Activated naive CD4-positive, alpha-beta T cell treated with anti-CD3 and anti-CD28 coated beads, Interleukin-2, amount 10 ng/mL, durations not matched to agents 7 days and 5 days (primary cell): ENCODE measurements at regions of chr7 and their contacts with region 1.

Region 1: GRCh38 chr7:44565097-44565794 is 8.5 kb downstream of the DDX56 start:
- DNase-seq: peak; percentile 75
- H3K4me3 Mint-ChIP-seq: no peak overlapping the region
- H3K27ac Mint-ChIP-seq: peak overlapping the region; percentile 62
- H3K4me1 Mint-ChIP-seq: peaks cover 11% of the 10 kb centered on the region
- H3K27me3 Mint-ChIP-seq: no peaks in the 10 kb centered on the region

Region 2: GRCh38 chr7:44348300-44348699 is 216.9 kb before region 1 on chr7:
- CTCF ChIA-PET with region 1: interaction called, 12 read pairs
- DNase-seq: peak; percentile 42
- H3K4me3 Mint-ChIP-seq: no peak overlapping the region
- H3K27ac Mint-ChIP-seq: no peak overlapping the region
- H3K4me1 Mint-ChIP-seq: no peaks in the 10 kb centered on the region
- H3K27me3 Mint-ChIP-seq: peaks cover 35% of the 10 kb centered on the region

Region 3: DNA sequence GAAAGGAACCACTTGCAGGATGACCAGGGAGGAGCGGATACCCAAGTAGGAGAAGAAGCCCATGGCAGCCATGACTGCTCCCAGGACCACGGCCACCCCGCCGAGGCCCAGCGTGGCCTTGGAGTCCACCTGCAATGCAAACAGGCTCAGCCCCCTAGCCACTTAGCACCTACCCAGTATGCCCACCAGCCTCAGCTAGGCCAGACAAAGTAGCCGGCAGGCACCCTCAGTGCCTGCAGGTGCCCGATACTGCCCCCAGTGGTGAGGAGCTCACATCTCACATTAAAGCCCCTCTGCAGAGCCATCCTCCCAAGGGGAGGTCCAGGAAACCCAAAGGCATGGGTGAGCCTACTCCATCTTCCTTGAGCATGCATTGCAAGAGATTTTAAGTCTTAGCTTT is 30.7 kb before region 1 on chr7:
- CTCF ChIA-PET with region 1: interaction called, 21 read pairs
- DNase-seq: peak; percentile 66
- H3K4me3 Mint-ChIP-seq: no peak overlapping the region
- H3K27ac Mint-ChIP-seq: no peak overlapping the region
- H3K4me1 Mint-ChIP-seq: peaks cover 4% of the 10 kb centered on the region
- H3K27me3 Mint-ChIP-seq: peaks cover 12% of the 10 kb centered on the region

Region 4: GRCh38 chr7:44547536-44548231 is 17.6 kb before region 1 on chr7:
- CTCF ChIA-PET with region 1: interaction called, 13 read pairs
- DNase-seq: no peak
- H3K4me3 Mint-ChIP-seq: no peak overlapping the region
- H3K27ac Mint-ChIP-seq: no peak overlapping the region
- H3K4me1 Mint-ChIP-seq: peaks cover 8% of the 10 kb centered on the region
- H3K27me3 Mint-ChIP-seq: peaks cover 36% of the 10 kb centered on the region

Region 5: DNA sequence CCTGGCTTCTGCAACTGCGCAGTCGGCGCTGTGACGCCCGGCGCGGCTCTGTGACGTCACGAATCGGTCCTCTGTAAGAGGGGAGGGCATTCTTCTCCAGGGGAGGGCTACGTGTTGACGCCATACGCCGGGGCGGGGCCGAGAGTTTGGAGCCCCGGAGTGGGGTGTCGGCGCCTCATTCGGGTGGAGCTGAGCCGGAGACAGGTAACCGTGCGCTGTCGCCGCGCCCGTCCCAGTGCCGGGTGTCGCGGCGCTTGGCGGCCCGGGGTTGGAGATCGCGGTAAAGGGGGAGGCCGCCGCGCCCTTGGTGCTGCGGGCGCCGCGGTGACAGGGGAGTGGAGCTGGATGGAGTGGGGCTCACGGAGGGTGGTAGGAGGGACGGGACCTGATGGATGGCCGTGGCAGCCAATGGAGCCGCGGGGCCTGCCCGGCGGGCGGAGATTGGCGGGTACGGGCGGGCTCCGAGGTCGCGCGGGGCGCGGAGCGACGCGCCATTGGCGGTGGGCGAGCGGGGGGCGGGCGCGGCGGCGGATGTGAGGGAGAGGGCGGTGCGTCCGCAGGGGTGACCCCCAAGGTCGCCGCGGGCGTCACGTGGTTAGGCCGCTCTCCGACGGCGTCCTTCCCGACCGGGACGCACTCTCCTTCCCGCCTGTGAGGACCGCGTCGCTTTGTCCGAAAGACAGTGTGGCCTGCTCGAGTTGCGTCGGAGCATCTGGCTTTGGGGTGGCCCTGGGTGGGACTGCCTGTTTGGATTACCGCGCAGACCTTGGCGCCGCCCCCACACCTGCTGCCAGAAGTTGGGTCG is 41.4 kb after region 1 on chr7 and contains the start of gene OGDH:
- CTCF ChIA-PET with region 1: no interaction called
- DNase-seq: peak; percentile 100
- H3K4me3 Mint-ChIP-seq: peak within 1 kb of the TSS; percentile 97
- H3K27ac Mint-ChIP-seq: peak within 1 kb of the TSS; percentile 100
- H3K4me1 Mint-ChIP-seq: peaks cover 52% of the 10 kb centered on the region
- H3K27me3 Mint-ChIP-seq: peaks cover 35% of the 10 kb centered on the region

Region 6: GRCh38 chr7:45073786-45074527 is 508.7 kb after region 1 on chr7:
- CTCF ChIA-PET with region 1: no interaction called
- DNase-seq: no peak
- H3K4me3 Mint-ChIP-seq: no peak overlapping the region
- H3K27ac Mint-ChIP-seq: no peak overlapping the region
- H3K4me1 Mint-ChIP-seq: peaks cover 4% of the 10 kb centered on the region
- H3K27me3 Mint-ChIP-seq: no peaks in the 10 kb centered on the region